MCF 10A (cell line): ENCODE measurements at regions of chr14 and their contacts with region 1.

Region 1: DNA sequence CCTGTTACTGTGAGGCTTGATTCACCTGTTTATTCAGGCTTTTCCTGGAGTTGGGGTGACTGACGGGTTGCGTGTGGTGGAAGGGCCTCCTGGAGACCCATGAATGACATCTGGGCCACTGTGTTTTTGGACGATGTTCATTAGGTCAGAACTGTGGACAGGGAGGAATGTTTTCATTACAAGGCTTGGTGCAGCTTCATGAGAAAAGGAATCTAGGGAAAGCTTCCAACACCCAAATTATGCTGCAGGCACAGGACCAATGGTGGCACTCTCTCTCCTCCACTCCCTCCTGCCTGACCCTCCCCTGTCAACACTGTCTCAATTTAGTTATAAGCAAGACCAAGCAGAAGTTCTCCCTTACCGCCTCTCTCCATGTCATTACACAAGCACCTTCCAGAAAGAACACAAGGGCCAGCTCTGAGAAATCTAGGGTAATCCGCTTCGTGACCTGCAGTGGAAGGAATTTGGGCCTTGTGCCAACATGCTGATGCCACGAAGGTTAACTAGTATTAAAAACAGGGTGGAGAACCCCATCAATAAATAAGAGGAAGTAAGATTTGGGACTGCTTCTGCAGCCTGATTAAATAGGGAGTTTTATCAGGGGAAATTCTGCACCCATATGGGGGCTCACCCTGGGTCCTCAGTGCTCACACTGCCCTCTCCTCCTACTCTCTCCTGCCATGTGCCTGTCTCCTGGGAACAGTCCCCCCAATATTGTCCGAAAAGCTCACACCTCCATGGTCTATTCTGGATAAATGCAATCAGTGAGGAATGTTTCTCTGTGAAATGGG is 200.3 kb downstream of the KTN1 start:
- DNase-seq: peak; percentile 82
- H3K4me3 Mint-ChIP-seq: no peak overlapping the region
- H3K27ac Mint-ChIP-seq: peak overlapping the region; percentile 65
- H3K4me1 Mint-ChIP-seq: peaks cover 26% of the 10 kb centered on the region
- H3K27me3 Mint-ChIP-seq: no peaks in the 10 kb centered on the region
- CTCF ChIP-seq: no peak

Region 2: GRCh38 chr14:55201224-55202050 is 578.9 kb before region 1 on chr14:
- CTCF ChIA-PET with region 1: no interaction called
- POLR2A ChIA-PET with region 1: no interaction called
- intact Hi-C with region 1: no loop called
- DNase-seq: no peak
- H3K4me3 Mint-ChIP-seq: no peak overlapping the region
- H3K27ac Mint-ChIP-seq: no peak overlapping the region
- H3K4me1 Mint-ChIP-seq: no peaks in the 10 kb centered on the region
- H3K27me3 Mint-ChIP-seq: no peaks in the 10 kb centered on the region
- CTCF ChIP-seq: no peak

Region 3: DNA sequence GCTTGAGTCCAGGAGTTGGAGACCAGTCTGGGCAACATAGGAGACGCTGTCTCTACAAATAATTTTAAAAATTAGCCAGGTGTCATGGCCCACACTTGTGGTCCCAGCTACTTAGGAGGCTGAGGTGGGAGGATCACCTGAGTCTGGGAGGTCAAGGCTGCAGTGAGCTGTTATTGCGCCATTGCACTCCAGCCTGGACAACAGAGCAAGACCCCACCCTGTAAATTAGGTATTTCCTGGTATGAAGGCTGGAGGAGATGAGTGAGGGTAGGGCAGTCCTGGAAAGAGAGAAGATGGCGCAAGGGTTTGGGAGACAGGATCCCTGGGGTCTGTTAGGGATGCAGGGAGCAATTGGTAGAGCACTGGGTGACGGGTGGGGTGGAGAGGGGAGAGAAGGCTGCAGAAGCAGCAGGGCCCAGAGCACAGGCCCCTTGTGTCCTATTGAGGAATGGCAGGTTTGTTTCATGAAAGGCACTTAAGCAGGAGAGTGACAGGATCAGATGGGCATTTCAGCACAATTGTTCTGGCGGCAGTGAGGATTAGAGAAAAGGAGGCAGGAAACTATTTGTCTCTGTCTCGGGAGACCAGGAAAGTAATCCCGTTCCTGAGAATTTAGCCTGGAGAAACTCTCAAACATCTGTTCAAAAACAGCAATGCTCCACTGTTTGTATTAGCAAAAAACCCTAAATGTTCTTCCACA is 247.6 kb before region 1 on chr14:
- CTCF ChIA-PET with region 1: no interaction called
- POLR2A ChIA-PET with region 1: no interaction called
- intact Hi-C with region 1: no loop called
- DNase-seq: no peak
- H3K4me3 Mint-ChIP-seq: no peak overlapping the region
- H3K27ac Mint-ChIP-seq: no peak overlapping the region
- H3K4me1 Mint-ChIP-seq: peaks cover 5% of the 10 kb centered on the region
- H3K27me3 Mint-ChIP-seq: no peaks in the 10 kb centered on the region
- CTCF ChIP-seq: no peak

Region 4: DNA sequence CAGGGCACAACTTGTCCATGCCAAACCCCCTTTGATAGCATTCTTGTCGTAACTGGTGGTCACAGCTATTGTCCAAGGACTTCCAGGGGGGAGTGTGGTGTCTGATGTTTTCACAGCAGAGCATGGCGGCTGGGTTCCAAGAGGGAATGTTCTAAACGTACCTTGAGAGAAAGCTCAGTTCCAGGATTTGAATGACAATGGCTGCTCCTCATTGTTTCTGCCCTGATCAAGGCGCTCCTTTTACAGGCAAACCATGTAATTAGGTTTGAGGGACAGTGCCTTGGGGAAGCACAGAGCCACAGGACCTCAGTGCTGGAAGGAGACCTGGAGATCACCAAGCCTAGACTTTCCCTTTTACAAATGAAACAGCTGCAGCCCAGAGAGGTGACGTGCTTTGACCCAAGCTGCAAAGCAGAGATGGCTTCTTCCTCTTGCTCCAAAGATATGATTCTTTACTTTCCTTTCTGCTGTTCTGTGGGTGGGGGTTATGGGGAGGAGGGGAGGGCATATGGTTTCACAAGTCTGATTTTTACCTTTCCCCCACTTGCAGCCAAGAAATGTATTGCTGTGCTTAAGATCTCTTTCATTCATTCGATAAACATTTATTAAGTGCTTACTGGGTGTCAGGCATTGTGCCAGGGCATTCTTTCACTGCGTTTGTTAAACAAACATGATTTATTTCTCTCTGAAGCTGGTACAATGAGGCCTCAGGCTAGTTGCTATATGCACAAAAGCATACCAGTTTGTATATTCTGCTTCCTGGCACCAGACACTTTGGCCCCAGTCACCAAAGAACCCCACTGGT is 27.6 kb before region 1 on chr14:
- CTCF ChIA-PET with region 1: interaction called, 3 read pairs
- POLR2A ChIA-PET with region 1: interaction called, 15 read pairs
- intact Hi-C with region 1: no loop called
- DNase-seq: peak; percentile 78
- H3K4me3 Mint-ChIP-seq: no peak overlapping the region
- H3K27ac Mint-ChIP-seq: no peak overlapping the region
- H3K4me1 Mint-ChIP-seq: peaks cover 26% of the 10 kb centered on the region
- H3K27me3 Mint-ChIP-seq: no peaks in the 10 kb centered on the region
- CTCF ChIP-seq: no peak

Region 5: DNA sequence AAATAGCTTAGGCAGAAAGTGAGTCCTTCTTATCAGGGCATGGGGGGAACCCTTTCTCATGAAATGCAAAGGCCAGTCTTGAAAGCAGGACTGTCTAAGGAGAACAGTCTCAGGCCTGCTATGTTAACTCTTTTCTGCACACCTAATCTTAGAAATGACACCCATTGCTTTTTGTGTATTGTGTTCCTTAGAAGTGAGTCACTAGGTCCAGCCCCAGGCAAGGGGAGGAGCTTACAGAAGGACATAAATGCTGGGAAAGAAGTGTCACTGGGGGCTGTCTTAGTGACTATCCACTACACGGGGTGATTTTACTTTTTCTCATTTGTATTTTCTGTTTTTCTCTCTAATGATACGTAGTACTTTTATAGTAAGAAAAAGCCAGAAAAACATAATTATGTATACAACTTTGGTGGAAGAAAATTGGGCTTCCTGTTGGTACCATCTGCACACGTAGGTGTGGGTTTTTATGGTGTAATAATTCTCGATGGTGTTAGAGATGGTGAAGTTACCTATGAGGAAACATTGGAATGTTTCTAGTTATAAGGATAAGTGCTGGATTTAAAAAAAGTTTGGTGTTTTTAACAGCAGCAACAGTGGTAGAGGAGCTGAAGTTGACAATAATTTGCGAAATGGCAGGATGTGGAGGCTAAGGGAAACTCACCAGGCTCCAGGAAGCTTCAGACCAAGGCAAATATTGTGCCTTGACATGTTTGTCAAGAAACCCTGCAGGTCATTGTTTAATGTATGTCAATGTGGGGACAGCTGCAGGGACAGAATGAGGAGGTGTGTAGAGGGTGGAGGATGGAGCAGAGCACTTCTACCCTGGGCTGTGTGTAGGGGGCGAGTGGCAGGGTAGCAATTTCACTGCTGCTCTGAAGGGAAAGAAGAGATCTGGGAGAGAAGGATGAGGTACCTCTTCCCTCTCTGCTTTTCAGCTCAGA is 14.6 kb after region 1 on chr14:
- CTCF ChIA-PET with region 1: interaction called, 4 read pairs
- POLR2A ChIA-PET with region 1: interaction called, 15 read pairs
- intact Hi-C with region 1: no loop called
- DNase-seq: peak; percentile 88
- H3K4me3 Mint-ChIP-seq: no peak overlapping the region
- H3K27ac Mint-ChIP-seq: no peak overlapping the region
- H3K4me1 Mint-ChIP-seq: peaks cover 9% of the 10 kb centered on the region
- H3K27me3 Mint-ChIP-seq: no peaks in the 10 kb centered on the region
- CTCF ChIP-seq: no peak

Region 6: GRCh38 chr14:55814873-55815272 is 34.5 kb after region 1 on chr14:
- CTCF ChIA-PET with region 1: no interaction called
- POLR2A ChIA-PET with region 1: no interaction called
- intact Hi-C with region 1: no loop called
- DNase-seq: no peak
- H3K4me3 Mint-ChIP-seq: no peak overlapping the region
- H3K27ac Mint-ChIP-seq: peak overlapping the region; percentile 64
- H3K4me1 Mint-ChIP-seq: peaks cover 12% of the 10 kb centered on the region
- H3K27me3 Mint-ChIP-seq: no peaks in the 10 kb centered on the region
- CTCF ChIP-seq: no peak

Region 7: DNA sequence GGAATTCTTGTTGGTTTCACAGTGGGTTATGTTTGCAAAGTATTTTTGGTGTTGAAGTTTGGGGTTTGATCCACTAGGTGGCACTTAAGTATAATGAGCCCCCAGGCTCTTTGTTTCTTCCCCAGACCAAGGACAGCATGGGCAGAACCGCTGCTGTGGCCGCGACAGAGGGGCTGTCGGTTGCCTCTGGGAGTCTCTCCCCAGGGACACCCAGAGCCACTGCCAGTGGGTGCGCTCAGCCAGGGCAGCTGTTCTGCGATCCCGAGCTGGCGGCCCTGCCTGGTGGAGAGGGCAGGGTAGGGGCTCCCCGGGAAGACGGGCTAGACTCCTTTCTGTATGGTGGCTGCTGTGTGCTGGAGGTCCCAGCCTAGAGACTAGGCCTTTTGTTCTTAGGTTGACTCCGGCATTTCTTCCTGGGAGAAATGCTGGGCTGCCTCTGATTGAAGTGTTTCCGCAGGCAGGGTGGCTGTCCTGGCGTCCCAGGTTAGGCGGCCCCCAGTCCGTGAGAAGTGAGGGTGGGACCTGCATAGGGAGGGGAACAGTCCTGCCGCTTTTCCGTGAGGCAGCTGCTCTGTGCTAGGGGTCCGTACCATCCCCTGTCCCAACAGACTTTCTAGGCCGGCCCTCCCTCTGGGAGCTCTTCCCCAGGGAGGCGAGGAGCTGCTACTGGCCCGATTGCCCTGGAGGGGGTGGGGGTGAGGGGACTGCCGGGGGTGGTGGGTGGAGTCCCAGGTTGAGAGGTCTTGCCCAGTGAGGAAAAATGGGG is 84.7 kb after region 1 on chr14:
- CTCF ChIA-PET with region 1: no interaction called
- POLR2A ChIA-PET with region 1: no interaction called
- intact Hi-C with region 1: no loop called
- DNase-seq: peak; percentile 36
- H3K4me3 Mint-ChIP-seq: no peak overlapping the region
- H3K27ac Mint-ChIP-seq: no peak overlapping the region
- H3K4me1 Mint-ChIP-seq: no peaks in the 10 kb centered on the region
- H3K27me3 Mint-ChIP-seq: no peaks in the 10 kb centered on the region
- CTCF ChIP-seq: no peak